ENCODE measurements at regions of chr18 and their contacts with region 1.

Region 1: DNA sequence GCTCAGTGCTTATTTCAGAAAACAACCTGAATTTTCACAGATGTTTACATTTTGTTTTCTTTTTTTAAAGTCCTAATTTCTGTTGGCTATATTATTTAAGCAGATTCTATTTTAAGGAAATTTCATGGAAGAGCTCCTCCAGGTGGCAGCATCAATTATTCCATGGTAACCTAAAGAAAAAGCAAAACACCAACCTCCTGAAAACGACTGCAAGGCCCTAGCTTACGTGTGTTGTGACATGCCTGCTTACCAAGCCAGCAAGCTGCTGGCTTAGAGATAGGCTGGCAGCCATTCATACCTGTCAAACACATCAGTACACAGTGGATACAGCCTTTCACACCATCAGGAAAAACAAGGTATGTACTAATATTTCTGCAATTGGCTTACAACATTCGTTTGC is 64.9 kb downstream of the LPIN2 start:
- DNase-seq: peak; percentile 62
- H3K4me3 ChIP-seq: no peak overlapping the region
- H3K27ac ChIP-seq: peak overlapping the region; percentile 5
- H3K4me1 ChIP-seq: no peaks in the 10 kb centered on the region
- H3K27me3 ChIP-seq: no peaks in the 10 kb centered on the region
- CTCF ChIP-seq: peak in 1 of 2 donors; percentile 38
- POLR2A ChIP-seq: no peak

Region 2: DNA sequence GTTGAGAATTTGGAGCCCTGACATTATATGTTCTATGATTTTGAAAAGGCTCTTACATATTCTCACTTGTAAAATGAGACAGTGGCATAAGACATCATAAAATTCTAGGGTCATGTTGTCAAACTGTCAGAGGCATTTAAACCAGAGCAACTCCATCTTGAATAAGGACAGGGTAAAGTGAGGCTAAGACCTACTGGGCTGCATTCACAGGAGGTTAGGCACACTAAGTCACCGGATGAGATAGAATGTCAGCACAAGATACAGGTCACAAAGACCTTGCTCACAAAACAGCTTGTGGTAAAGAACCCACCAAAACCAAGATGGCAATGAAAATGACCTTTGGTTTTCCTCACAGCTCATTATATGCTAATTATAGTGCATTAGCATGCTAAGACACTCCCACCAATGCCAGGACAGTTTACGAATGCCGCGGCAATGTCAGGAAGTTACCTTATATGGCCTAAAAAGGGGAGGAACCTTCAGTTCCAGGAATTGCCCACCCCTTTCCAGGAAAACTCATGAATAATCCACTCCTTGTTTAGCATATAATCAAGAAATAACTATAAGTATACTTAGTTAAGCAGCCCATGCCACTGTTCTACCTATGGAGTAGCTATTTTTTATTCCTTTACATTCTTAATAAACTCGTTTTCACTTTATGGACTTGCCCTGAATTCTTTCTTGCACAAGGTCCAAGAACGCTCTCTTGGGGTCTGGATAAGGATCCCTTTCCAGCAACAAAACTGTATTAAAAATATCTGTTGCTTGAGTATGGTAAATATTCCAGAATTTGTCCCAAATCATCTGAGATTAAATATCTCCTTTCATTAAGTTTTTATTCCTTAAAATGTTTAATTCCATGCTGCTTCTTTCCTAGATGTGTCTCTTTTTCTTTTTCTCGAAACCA is 783.1 kb before region 1 on chr18:
- CTCF ChIA-PET with region 1: no interaction called
- POLR2A ChIA-PET with region 1: no interaction called
- dilution Hi-C with region 1: no loop called
- intact Hi-C with region 1: no loop called
- DNase-seq: no peak
- H3K4me3 ChIP-seq: no peak overlapping the region
- H3K27ac ChIP-seq: no peak overlapping the region
- H3K4me1 ChIP-seq: no peaks in the 10 kb centered on the region
- H3K27me3 ChIP-seq: no peaks in the 10 kb centered on the region
- CTCF ChIP-seq: no peak
- POLR2A ChIP-seq: no peak

Region 3: GRCh38 chr18:2729757-2730156 is 218.3 kb before region 1 on chr18:
- CTCF ChIA-PET with region 1: no interaction called
- POLR2A ChIA-PET with region 1: no interaction called
- dilution Hi-C with region 1: no loop called
- intact Hi-C with region 1: no loop called
- DNase-seq: no peak
- H3K4me3 ChIP-seq: no peak overlapping the region
- H3K27ac ChIP-seq: no peak overlapping the region
- H3K4me1 ChIP-seq: no peaks in the 10 kb centered on the region
- H3K27me3 ChIP-seq: no peaks in the 10 kb centered on the region
- CTCF ChIP-seq: no peak
- POLR2A ChIP-seq: no peak

Region 4: GRCh38 chr18:2958819-2959298 is 10.8 kb after region 1 on chr18:
- CTCF ChIA-PET with region 1: interaction called, 18 read pairs
- POLR2A ChIA-PET with region 1: no interaction called
- dilution Hi-C with region 1: no loop called
- intact Hi-C with region 1: no loop called
- DNase-seq: no peak
- H3K4me3 ChIP-seq: no peak overlapping the region
- H3K27ac ChIP-seq: no peak overlapping the region
- H3K4me1 ChIP-seq: no peaks in the 10 kb centered on the region
- H3K27me3 ChIP-seq: no peaks in the 10 kb centered on the region
- CTCF ChIP-seq: no peak
- POLR2A ChIP-seq: no peak